GM12878 (cell line): ENCODE measurements at regions of chr1 and their contacts with region 1.

Region 1: GRCh38 chr1:150995896-150996295 is 10.8 kb downstream of the MINDY1 start:
- DNase-seq: no peak
- ATAC-seq: peak; percentile 68
- H3K4me3 ChIP-seq: no peak overlapping the region
- H3K27ac ChIP-seq: no peak overlapping the region
- H3K4me1 ChIP-seq: no peaks in the 10 kb centered on the region
- H3K27me3 ChIP-seq: no peaks in the 10 kb centered on the region
- CTCF ChIP-seq: peak; percentile 46 to 59 (median 50)
- EP300 ChIP-seq: no peak
- POLR2A ChIP-seq: no peak
- RAD21 ChIP-seq: peak; percentile 56

Region 2: GRCh38 chr1:150237746-150238145 is 758.1 kb before region 1 on chr1:
- CTCF ChIA-PET with region 1: no interaction called
- POLR2A ChIA-PET with region 1: no interaction called
- RAD21 ChIA-PET with region 1: no interaction called
- SMC1A ChIA-PET with region 1: no interaction called
- in situ Hi-C with region 1: no loop called
- intact Hi-C with region 1: no loop called
- DNase-seq: no peak
- ATAC-seq: no peak
- H3K4me3 ChIP-seq: no peak overlapping the region
- H3K27ac ChIP-seq: no peak overlapping the region
- H3K4me1 ChIP-seq: no peaks in the 10 kb centered on the region
- H3K27me3 ChIP-seq: no peaks in the 10 kb centered on the region
- CTCF ChIP-seq: no peak
- EP300 ChIP-seq: no peak
- POLR2A ChIP-seq: no peak
- RAD21 ChIP-seq: no peak

Region 3: DNA sequence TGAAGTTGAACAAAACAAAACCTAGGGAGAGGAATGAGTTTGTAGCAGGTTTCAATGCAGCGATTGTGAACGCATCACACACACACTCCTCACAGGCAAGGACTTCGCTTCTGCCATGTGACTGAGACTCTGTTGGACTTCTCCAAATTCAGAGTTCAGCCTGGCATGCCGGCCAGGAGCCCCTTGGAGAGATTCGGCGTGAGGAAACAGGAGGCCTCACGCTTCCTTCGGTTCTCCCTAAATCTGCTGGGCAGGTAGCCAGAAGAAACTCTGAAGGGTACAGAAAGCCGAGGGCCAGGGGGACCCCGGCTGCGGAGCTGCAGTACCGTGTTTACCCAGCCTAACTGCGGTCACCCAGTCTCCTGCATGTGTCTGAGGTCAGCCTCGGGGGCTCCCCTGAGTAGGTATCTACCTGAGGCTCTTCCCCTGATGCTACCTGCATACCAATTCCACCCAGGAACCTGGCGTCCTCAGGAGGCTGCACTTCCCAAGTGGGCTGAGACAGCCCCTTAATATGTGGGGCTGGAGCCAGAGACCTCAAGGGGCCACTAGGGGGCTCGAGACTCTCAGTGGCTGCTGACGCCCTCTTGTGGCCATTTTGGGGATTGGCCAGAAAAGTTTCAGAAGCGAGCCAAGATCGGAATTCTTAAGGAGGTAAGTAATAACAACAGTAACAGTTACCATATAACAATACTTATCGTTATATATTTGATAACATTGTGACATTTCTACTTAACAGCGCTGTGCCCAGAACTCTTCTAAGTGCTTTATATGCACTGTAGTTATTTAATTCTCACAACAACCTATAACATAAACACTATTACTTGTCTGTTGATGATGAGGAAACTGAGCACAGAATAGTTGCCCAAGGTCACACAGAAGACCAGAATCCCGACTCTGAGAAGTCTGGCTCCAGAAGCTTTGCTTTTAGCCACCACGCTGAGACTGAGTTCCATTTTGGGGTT is 16.5 kb before region 1 on chr1:
- CTCF ChIA-PET with region 1: interaction called, 252 read pairs
- POLR2A ChIA-PET with region 1: no interaction called
- RAD21 ChIA-PET with region 1: interaction called, 19 read pairs
- SMC1A ChIA-PET with region 1: interaction called, 7 read pairs
- in situ Hi-C with region 1: no loop called
- intact Hi-C with region 1: no loop called
- DNase-seq: peak; percentile 40
- ATAC-seq: peak; percentile 78
- H3K4me3 ChIP-seq: no peak overlapping the region
- H3K27ac ChIP-seq: no peak overlapping the region
- H3K4me1 ChIP-seq: no peaks in the 10 kb centered on the region
- H3K27me3 ChIP-seq: no peaks in the 10 kb centered on the region; a peak in 2 of 4 replicates
- CTCF ChIP-seq: peak; percentile 100; a peak in 5 of 6 replicates
- EP300 ChIP-seq: no peak
- POLR2A ChIP-seq: no peak
- RAD21 ChIP-seq: peak; percentile 79

Region 4: DNA sequence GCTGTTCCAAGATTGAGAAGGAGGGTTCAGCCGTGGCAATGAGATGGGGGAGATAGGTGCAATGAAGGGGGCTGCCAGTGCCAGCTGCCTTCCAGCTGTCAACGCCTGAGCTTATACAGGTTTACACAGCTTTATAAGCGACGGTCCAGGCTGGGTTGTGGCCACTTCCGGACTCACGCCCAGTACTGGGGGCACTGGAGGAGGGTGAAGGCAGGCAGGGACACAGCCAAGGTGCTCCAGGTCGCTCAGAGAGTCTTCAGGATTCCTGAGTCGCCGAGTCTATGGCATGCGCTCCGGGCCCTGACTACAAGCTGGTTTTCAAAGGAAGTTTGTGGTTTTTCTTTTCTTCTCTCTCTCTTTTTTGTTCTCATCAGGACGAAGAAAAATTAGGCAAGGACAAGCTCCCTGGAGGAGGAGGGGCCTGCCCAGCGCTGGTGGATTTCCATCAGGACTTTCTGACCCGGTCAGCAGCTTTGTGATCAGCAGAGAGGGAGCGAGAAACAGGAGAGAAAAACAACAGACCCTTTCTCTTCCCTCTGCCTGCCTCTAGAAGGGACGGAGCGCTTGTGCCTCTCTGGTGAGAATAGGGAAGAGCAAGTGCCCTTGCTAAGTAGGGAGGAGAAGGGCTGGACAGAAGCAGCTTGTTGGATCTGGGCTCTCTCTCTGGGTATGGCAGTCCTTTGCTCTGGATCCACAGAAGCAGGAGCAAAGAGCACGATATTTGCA is 10.6 kb after region 1 on chr1 and contains the start of gene MINDY1:
- CTCF ChIA-PET with region 1: interaction called, 88 read pairs
- POLR2A ChIA-PET with region 1: interaction called, 5 read pairs
- RAD21 ChIA-PET with region 1: interaction called, 20 read pairs
- SMC1A ChIA-PET with region 1: interaction called, 34 read pairs
- in situ Hi-C with region 1: no loop called
- intact Hi-C with region 1: no loop called
- DNase-seq: peak; percentile 32
- ATAC-seq: peak; percentile 71
- H3K4me3 ChIP-seq: peak within 1 kb of the TSS; percentile 73
- H3K27ac ChIP-seq: peak within 1 kb of the TSS; percentile 73
- H3K4me1 ChIP-seq: peaks cover 12% of the 10 kb centered on the region
- H3K27me3 ChIP-seq: no peaks in the 10 kb centered on the region
- CTCF ChIP-seq: peak; percentile 38 to 57 (median 43); a peak in 4 of 6 replicates
- EP300 ChIP-seq: no peak
- POLR2A ChIP-seq: peak; percentile 60
- RAD21 ChIP-seq: peak; percentile 39; the same call in 1 of the 2 replicates
- polyA plus RNA-seq, gene MINDY1: 0.48 to 0.49 TPM